Ascending aorta (tissue), 2 donors: ENCODE measurements at regions of chr6 and their contacts with region 1.

Region 1: GRCh38 chr6:159789377-159790148 is at the start of gene TCP1:
- DNase-seq: peak; percentile 98 to 100
- H3K4me3 ChIP-seq: peak within 1 kb of the TSS; percentile 68 to 85
- H3K27ac ChIP-seq: peak within 1 kb of the TSS; percentile 93 to 98
- H3K4me1 ChIP-seq: peaks cover 11 to 36% of the 10 kb centered on the region in 2 donors
- H3K27me3 ChIP-seq: no peaks in the 10 kb centered on the region
- CTCF ChIP-seq: peak in 1 of 3 experiments; percentile 7
- total RNA-seq, gene TCP1: 46.7 TPM

Region 2: DNA sequence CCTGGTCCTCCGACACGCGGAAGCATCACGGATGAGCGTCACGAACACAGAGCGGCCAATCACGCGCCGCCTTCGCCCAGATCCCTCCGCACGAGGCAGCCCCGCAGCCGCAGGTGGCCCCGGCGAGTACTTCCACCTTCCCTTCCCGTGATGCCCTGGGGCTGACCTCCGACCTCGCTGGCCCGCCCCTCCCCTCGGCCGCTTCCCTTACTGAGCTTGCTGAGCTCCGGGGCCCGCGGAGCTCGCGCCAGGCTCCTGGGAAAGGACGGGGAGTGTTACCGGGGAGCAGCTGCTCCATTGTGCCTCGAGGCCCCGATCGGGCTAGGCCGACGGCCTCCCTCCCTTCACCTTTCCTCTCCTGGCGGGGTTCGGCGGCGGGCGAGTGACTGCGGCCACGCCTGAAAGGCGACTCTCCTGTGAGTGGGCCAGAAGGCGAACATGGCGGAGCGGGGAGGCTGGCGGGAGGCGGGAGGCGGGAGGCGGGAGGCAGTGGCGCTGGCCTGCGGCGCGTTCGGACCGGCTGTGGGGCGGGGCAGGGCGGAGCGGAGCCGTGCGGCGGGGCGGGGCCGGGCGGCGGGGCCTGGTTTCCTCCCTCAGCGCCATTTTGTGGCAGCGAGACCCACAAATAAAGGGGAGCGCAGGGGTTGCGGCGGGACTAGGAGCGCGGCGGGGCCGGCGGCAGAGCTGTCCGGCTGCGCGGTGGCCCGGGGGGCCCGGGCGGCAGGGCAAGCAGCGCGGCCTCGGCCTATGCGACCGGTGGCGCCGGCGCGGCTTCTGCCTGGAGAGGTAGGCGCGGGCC is 62.4 kb before region 1 on chr6 and contains the start of gene WTAP:
- intact Hi-C with region 1: loop called (anchors 1 kb)
- DNase-seq: peak; percentile 87 to 97
- H3K4me3 ChIP-seq: peak within 1 kb of the TSS; percentile 95 to 100
- H3K27ac ChIP-seq: peak within 1 kb of the TSS; percentile 98 to 100
- H3K4me1 ChIP-seq: peaks cover 6 to 25% of the 10 kb centered on the region in 2 donors
- H3K27me3 ChIP-seq: no peaks in the 10 kb centered on the region
- CTCF ChIP-seq: no peak
- total RNA-seq, gene WTAP: 44.6 TPM

Region 3: DNA sequence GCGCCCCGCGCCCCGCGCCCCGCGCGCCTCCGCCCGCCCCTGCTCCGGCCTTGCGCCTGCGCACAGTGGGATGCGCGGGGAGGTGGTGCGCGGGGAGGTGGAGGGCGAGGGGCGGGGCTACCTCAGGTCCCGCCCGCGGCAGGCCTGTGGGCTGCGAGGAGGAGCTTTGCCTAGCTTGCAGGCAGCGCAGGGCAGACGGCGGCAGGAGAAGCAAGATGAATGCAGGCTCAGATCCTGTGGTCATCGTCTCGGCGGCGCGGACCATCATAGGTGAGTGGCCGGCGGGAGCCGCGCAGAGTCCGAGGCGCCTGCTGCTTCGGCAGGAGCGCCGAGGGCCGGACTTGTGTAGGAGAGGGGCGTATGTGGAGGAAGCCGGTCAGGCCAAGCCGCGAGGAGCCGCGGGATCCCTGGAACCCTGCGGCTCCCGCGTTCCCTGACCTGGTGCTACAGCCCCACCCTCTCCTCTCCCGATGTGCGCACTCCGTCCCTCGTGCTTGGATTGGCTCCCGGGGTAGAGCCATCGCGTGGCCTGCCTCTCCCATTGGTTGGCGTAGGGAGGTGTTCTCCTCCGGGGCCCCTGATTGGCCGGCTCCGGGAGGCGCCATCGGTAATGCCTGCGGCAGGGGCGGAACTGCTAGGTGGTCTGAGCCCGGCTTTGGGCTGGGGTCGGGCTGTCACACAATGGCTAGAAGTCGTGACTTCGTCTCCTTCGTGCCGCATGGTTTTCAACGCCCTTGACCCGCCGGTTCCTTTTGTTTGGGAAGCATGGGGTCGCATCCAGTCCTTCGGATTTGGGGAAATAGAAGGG is 27.5 kb before region 1 on chr6 and contains the start of gene ACAT2:
- intact Hi-C with region 1: loop called (anchors 1 kb)
- DNase-seq: peak; percentile 89 to 98
- H3K4me3 ChIP-seq: peak within 1 kb of the TSS; percentile 80 to 99
- H3K27ac ChIP-seq: peak within 1 kb of the TSS; percentile 96 to 99
- H3K4me1 ChIP-seq: peaks cover 5 to 11% of the 10 kb centered on the region in 2 donors
- H3K27me3 ChIP-seq: no peaks in the 10 kb centered on the region
- CTCF ChIP-seq: peak in 1 of 3 experiments; percentile 18
- total RNA-seq, gene ACAT2: 0.85 TPM

Region 4: GRCh38 chr6:159852877-159853276 is 63.3 kb after region 1 on chr6:
- intact Hi-C with region 1: loop called (anchors 2 kb)
- DNase-seq: no peak
- H3K4me3 ChIP-seq: no peak overlapping the region
- H3K27ac ChIP-seq: peak overlapping the region in 1 of 2 donors; percentile 36
- H3K4me1 ChIP-seq: peaks cover 0 to 11% of the 10 kb centered on the region in 2 donors
- H3K27me3 ChIP-seq: no peaks in the 10 kb centered on the region
- CTCF ChIP-seq: peak in 1 of 3 experiments; percentile 14

Region 5: DNA sequence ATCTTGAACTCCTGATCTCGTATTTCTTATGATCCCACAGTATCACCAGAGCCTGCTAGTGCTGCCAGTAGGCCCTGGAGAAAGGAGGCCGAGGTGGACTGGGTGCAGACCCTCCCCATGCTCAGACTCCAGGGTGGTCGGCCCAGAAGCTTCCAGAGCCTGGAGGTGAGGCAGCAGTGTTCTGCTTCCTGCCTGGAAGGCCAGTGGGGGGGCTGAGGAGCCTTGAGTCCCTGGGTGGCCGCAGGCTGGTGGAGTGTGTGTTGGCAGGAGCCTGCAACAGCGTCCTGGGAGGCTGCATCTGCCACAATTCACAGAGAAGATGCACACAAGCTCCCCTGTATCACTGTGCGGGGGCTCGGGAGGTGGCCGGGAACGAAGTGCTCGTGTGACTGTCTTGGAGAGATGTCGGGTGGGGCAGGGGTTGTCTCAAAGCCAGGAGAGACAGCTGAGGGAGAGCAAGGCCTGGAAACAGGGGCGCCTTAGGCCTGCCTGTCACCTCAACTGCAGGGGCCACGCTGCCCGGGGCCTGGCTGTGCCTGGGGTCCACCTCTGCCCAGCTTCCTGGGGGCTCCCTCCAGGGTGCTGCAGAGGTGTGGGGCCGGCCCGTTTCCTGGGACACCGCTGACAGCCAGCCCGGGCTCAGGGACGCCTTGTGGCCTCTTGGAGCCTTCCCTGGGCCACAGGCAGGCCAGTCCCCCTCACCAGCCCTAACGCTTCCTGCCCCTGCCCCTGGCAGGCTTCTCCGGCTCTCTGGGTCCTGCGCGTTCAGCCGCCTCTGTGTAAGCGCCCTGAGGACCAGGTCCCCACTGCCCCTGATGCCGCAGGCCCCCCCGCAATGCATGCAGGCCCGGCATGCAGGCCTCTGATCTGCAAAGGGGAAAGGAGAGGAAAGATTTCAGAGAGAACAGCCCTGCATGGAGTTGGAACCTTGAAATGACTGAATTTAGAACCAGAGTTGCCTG is 77.0 kb after region 1 on chr6:
- intact Hi-C with region 1: no loop called
- DNase-seq: no peak
- H3K4me3 ChIP-seq: no peak overlapping the region
- H3K27ac ChIP-seq: no peak overlapping the region
- H3K4me1 ChIP-seq: peaks cover 2 to 5% of the 10 kb centered on the region in 2 donors
- H3K27me3 ChIP-seq: no peaks in the 10 kb centered on the region
- CTCF ChIP-seq: no peak